Activated CD4-positive, alpha-beta T cell treated with anti-CD3 and anti-CD28 coated beads, Interleukin-2, amount 10 ng/mL, durations not matched to agents 24 days and 14 days (primary cell): ENCODE measurements at regions of chr17 and their contacts with region 1.

Region 1: DNA sequence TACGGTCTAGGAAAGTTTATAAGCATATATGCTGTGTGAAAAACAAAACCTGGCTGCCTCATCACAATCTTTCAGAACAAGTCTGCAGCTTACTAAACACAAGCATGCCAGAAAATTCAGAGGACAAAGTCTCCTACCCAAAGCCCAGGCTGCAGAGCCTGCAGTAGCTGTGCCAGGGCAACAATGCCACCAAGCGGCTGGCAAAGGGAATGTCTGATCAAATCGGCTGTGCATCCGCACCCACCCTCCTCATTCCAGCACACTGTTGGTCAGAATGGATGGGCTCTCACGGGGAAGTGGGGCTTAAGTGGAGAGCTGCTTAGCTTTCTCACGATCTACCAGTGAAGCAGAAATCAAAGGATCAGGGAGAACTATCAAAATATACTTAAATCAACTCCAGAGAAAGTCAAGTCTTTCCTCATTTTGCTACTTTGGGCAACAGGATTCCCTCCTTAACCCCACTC is 73.5 kb downstream of the CYTH1 start:
- DNase-seq: peak; percentile 85
- H3K4me3 Mint-ChIP-seq: peak overlapping the region; percentile 78
- H3K27ac Mint-ChIP-seq: peak overlapping the region; percentile 93
- H3K4me1 Mint-ChIP-seq: peaks cover 56% of the 10 kb centered on the region
- H3K27me3 Mint-ChIP-seq: no peaks in the 10 kb centered on the region

Region 2: DNA sequence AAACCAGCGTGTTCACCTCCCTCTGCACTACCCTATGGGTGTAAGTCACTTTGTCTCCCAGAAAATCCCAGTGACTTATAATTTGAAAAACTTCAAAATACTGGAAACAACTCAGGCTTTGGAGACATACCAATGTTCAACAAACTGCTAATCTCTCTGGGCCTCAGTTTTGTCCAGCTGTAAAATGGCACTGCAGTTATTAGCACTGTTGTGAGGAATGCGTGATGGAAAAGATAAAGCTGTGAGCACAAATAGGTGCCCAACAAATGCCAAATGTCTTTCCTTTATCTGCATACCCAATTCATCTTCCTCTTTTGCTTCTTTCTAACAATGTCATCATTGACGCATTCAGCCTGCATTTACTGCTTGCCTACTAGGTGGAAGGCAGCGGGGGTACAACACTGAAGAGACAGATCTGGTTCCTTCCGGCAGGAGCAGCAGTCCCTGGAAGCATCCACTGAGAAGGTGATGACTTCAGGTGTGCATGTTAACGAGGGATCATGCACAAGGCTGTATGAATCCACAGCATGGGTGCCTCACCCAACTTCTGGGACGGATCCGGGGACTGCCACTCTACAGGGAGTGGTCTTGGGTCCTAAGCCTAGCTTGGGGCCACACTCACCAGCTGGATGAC is 10.2 kb after region 1 on chr17:
- intact Hi-C with region 1: loop called (anchors 1 kb)
- DNase-seq: no peak
- H3K4me3 Mint-ChIP-seq: peak overlapping the region; percentile 69
- H3K27ac Mint-ChIP-seq: peak overlapping the region; percentile 88
- H3K4me1 Mint-ChIP-seq: peaks cover 73% of the 10 kb centered on the region
- H3K27me3 Mint-ChIP-seq: no peaks in the 10 kb centered on the region

Region 3: DNA sequence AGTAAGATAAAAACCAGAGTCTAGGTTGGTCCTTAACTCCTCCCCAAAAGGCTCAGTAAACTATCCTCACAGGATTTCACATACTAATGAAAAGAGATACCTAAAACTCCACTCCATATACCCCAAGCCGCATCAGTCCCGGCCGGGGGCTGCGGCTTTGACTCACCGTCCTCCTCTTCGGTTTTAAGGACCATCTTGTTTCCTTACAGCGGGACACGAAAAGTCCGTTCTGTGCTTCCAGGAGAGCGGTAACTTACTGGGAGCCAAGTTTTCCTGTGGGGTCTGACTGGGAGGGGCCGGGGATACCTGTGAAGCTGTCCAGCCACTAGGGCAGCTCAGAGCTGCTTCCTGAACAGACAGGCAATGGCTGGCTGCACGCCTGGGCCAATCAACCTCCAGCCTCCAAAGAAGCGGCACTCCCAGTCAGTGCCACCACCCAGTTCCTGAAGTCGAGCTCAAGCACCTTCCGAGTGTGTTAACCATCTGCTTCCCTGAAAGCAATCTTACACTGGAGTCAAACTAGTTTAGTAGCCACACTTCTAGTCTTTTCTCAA is 28.1 kb after region 1 on chr17:
- intact Hi-C with region 1: loop called (anchors 2 kb)
- DNase-seq: peak; percentile 91
- H3K4me3 Mint-ChIP-seq: peak overlapping the region; percentile 88
- H3K27ac Mint-ChIP-seq: peak overlapping the region; percentile 90
- H3K4me1 Mint-ChIP-seq: peaks cover 80% of the 10 kb centered on the region
- H3K27me3 Mint-ChIP-seq: no peaks in the 10 kb centered on the region